ENCODE measurements at regions of chr11 and their contacts with region 1.

Region 1: DNA sequence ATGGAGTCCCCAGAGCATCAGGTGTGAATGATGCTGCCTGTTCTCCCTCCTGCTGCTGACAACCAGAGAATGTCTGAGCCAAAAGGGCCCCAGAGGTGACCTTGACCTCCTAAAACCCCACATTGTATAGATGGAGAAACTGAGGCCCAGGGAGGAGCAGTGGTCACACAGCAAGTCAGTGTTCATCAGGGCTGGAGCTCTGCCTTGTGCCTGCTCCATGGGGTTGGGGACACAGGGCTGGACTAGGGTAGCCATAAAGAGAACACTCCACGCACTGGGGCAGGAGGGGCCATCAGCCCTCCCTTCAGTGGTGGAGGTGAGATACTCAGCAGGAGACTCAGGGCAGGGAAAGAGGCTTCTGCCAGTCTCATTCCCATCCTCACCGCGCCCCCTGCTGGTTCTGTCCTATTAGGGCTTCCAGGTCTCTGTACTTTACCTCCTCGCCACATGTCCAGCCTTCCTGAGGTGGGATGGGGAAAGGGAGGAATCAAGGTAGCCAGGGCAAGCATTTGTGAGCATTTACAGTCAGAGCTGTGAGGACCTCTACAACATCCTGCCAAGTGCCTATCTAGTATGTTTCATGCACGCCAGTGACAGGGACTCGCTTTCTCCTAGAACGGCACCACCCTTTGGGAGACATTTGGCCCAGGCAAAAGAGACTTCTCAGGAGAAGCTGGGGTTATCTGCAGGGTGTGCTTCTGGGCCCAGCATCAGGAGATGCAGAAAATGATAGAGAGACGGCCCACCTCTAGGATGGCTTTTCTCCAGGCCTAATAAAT is 43.2 kb downstream of the NEU3 start:
- DNase-seq: peak; percentile 68
- H3K4me3 ChIP-seq: no peak overlapping the region
- H3K27ac ChIP-seq: peak overlapping the region in 1 of 2 experiments; percentile 52; a peak in 2 of 4 replicates
- H3K4me1 ChIP-seq: peaks cover 6 to 11% of the 10 kb centered on the region in 2 experiments; a peak in 2 of 4 replicates
- H3K27me3 ChIP-seq: no peaks in the 10 kb centered on the region
- CTCF ChIP-seq: peak; percentile 73
- EP300 ChIP-seq: no peak
- RAD21 ChIP-seq: peak; percentile 75

Region 2: GRCh38 chr11:74929431-74930363 is 102.3 kb before region 1 on chr11:
- CTCF ChIA-PET with region 1: interaction called, 22 read pairs
- POLR2A ChIA-PET with region 1: no interaction called
- DNase-seq: peak; percentile 58
- H3K4me3 ChIP-seq: no peak overlapping the region
- H3K27ac ChIP-seq: no peak overlapping the region; a peak in 1 of 4 replicates
- H3K4me1 ChIP-seq: peaks cover 0 to 12% of the 10 kb centered on the region in 2 experiments; a peak in 2 of 4 replicates
- H3K27me3 ChIP-seq: no peaks in the 10 kb centered on the region
- CTCF ChIP-seq: peak; percentile 95
- EP300 ChIP-seq: no peak
- RAD21 ChIP-seq: peak; percentile 93

Region 3: DNA sequence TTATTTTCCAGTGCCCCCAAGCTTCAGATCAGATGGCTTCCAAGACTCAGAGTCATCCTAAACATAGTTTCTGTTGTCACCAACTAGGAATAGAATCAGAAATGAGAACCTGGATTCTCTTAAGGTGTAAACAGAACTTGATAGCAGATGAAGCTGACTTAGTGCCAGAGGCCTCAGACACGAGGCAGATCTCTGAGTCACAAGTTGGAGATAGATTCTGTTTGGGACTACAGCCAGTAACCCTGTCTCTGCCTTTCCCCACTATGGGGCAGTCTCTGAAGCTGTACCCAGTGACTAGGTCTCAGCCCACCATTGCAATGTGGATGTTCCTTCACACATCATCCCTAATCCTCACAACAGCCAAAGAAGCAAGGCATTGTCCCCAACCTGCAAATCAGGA is 17.8 kb before region 1 on chr11:
- CTCF ChIA-PET with region 1: interaction called, 14 read pairs
- POLR2A ChIA-PET with region 1: no interaction called
- DNase-seq: no peak
- H3K4me3 ChIP-seq: no peak overlapping the region
- H3K27ac ChIP-seq: peak overlapping the region; percentile 25 to 63; a peak in 3 of 4 replicates
- H3K4me1 ChIP-seq: peaks cover 0 to 9% of the 10 kb centered on the region in 2 experiments; a peak in 2 of 4 replicates
- H3K27me3 ChIP-seq: no peaks in the 10 kb centered on the region
- CTCF ChIP-seq: peak; percentile 45
- EP300 ChIP-seq: no peak
- RAD21 ChIP-seq: no peak